CD4-positive, alpha-beta memory T cell (primary cell): ENCODE measurements at regions of chr11 and their contacts with region 1.

Region 1: GRCh38 chr11:3977078-3977477 is 117.5 kb upstream of the RRM1 start:
- DNase-seq: no peak
- H3K4me3 ChIP-seq: no peak overlapping the region
- H3K4me3 Mint-ChIP-seq: no peak overlapping the region
- H3K27ac ChIP-seq: no peak overlapping the region
- H3K27ac Mint-ChIP-seq: peak overlapping the region in 3 of 7 donors; percentile 8 to 38 (median 11)
- H3K4me1 ChIP-seq: peaks cover 30% of the 10 kb centered on the region
- H3K4me1 Mint-ChIP-seq: peaks cover 44 to 79% (median 60%) of the 10 kb centered on the region in 4 donors
- H3K27me3 ChIP-seq: no peaks in the 10 kb centered on the region
- H3K27me3 Mint-ChIP-seq: no peaks in the 10 kb centered on the region

Region 2: DNA sequence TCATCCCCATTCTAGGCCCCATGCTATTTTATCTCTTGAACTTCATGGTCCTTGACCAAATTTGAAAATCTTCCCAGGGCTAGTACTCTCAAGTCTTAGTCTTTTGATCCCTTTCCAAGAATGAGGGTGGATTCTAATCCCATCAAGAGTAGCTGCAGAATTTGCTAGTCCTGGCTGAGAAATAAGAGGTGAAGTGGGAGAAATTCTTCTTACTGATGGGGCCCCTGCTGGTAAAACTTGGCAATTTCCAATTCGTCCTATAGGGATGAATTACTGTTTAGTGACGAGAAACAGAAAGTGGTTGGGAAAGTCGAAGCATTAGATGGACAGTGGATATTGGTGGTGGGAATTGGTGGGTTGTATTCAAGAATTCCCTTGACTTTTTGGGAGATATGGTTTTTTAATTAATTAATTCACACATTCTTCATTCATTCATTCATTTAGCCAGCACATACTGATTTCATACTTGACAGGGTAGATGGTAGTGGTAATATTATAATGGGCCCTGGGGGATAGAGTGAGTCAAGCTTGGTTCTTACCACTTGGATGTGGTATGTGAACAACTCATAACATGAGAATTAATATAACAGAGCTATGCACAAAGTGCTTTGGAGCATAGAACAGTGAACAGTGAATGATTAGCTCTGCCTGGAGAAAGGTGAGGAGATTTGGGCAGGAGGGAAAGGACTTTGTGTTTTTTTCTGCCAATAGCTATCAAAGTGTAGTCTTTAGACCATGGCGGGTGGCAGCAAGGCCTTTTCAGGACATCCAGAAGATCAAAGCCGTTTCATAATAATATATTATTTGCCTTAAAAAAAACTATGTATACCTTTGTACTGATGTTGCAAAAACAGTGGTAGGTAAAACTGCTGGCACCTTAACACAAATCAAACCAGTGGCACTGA is 17.8 kb before region 1 on chr11:
- CTCF ChIA-PET with region 1: interaction called, 3 read pairs
- POLR2A ChIA-PET with region 1: no interaction called
- intact Hi-C with region 1: loop called (anchors 2 kb)
- DNase-seq: no peak
- H3K4me3 ChIP-seq: no peak overlapping the region
- H3K4me3 Mint-ChIP-seq: peak overlapping the region in 3 of 8 donors; percentile 1 to 6 (median 4)
- H3K27ac ChIP-seq: no peak overlapping the region
- H3K27ac Mint-ChIP-seq: peak overlapping the region in 3 of 7 donors; percentile 11 to 68 (median 37)
- H3K4me1 ChIP-seq: peaks cover 60% of the 10 kb centered on the region
- H3K4me1 Mint-ChIP-seq: peaks cover 50 to 90% (median 71%) of the 10 kb centered on the region in 4 donors
- H3K27me3 ChIP-seq: no peaks in the 10 kb centered on the region
- H3K27me3 Mint-ChIP-seq: no peaks in the 10 kb centered on the region

Region 3: DNA sequence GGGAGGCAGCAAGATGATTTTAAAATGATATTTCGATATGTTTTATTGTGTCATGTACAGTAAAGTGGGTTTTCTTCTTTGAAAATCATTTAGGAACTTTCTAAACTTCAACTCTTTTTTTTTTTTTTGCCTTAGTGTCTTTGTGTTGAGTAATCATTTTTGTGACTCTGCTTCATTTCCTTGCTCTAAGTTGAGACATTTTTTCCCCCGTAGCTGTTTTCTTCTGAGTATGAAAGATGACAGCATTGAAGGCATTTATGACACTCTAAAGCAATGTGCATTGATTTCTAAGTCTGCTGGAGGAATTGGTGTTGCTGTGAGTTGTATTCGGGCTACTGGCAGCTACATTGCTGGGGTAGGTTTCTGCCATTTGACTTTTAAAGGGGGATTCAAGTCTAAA is 141.0 kb after region 1 on chr11:
- CTCF ChIA-PET with region 1: no interaction called
- POLR2A ChIA-PET with region 1: no interaction called
- intact Hi-C with region 1: no loop called
- DNase-seq: no peak
- H3K4me3 ChIP-seq: no peak overlapping the region
- H3K4me3 Mint-ChIP-seq: no peak overlapping the region
- H3K27ac ChIP-seq: no peak overlapping the region
- H3K27ac Mint-ChIP-seq: peak overlapping the region in 5 of 7 donors; percentile 1 to 58 (median 49)
- H3K4me1 ChIP-seq: no peaks in the 10 kb centered on the region
- H3K4me1 Mint-ChIP-seq: peaks cover 0 to 5% (median 1%) of the 10 kb centered on the region in 4 donors
- H3K27me3 ChIP-seq: no peaks in the 10 kb centered on the region
- H3K27me3 Mint-ChIP-seq: no peaks in the 10 kb centered on the region